Right cardiac atrium (tissue), 5 donors: ENCODE measurements at regions of chr6 and their contacts with region 1.

Region 1: GRCh38 chr6:108635505-108636226 is 74.9 kb downstream of the FOXO3 start:
- DNase-seq: no peak
- ATAC-seq: peak in 1 of 2 donors; percentile 52
- H3K4me3 ChIP-seq: no peak overlapping the region
- H3K27ac ChIP-seq: no peak overlapping the region
- H3K4me1 ChIP-seq: peaks cover 37% of the 10 kb centered on the region
- H3K27me3 ChIP-seq: no peaks in the 10 kb centered on the region

Region 2: GRCh38 chr6:108673602-108674001 is 37.9 kb after region 1 on chr6:
- intact Hi-C with region 1: loop called in 1 of 4 experiments (anchors 5 kb)
- DNase-seq: no peak
- ATAC-seq: peak in 1 of 2 donors; percentile 63
- H3K4me3 ChIP-seq: no peak overlapping the region
- H3K27ac ChIP-seq: no peak overlapping the region
- H3K4me1 ChIP-seq: peaks cover 33% of the 10 kb centered on the region
- H3K27me3 ChIP-seq: no peaks in the 10 kb centered on the region